ENCODE measurements at regions of chr4 and their contacts with region 1.

Region 1: GRCh38 chr4:99088481-99089365 is at the start of gene ADH5:
- DNase-seq: peak; percentile 81 to 95 (median 88)
- ATAC-seq: peak; percentile 93 to 95
- H3K4me3 Mint-ChIP-seq: peak within 1 kb of the TSS; percentile 92 to 99 (median 98)
- H3K27ac Mint-ChIP-seq: peak within 1 kb of the TSS; percentile 97 to 99 (median 99)
- H3K4me1 Mint-ChIP-seq: peaks cover 19 to 70% (median 56%) of the 10 kb centered on the region in 4 donors
- H3K27me3 Mint-ChIP-seq: no peaks in the 10 kb centered on the region
- polyA plus RNA-seq, gene ADH5: 125 to 137 (median 136) TPM

Region 2: GRCh38 chr4:98143001-98143899 is 945.5 kb before region 1 on chr4 and contains the start of gene STPG2:
- POLR2A ChIA-PET with region 1: interaction called, 17 read pairs
- DNase-seq: peak; percentile 85 to 95 (median 91)
- ATAC-seq: peak; percentile 95 to 97
- H3K4me3 Mint-ChIP-seq: peak within 1 kb of the TSS; percentile 89 to 99 (median 93)
- H3K27ac Mint-ChIP-seq: peak within 1 kb of the TSS; percentile 94 to 99 (median 98)
- H3K4me1 Mint-ChIP-seq: peaks cover 5 to 26% (median 18%) of the 10 kb centered on the region in 4 donors
- H3K27me3 Mint-ChIP-seq: no peaks in the 10 kb centered on the region
- polyA plus RNA-seq, gene STPG2: 0.09 to 0.10 TPM in 2 of 3 donors, not detected in the other

Region 3: DNA sequence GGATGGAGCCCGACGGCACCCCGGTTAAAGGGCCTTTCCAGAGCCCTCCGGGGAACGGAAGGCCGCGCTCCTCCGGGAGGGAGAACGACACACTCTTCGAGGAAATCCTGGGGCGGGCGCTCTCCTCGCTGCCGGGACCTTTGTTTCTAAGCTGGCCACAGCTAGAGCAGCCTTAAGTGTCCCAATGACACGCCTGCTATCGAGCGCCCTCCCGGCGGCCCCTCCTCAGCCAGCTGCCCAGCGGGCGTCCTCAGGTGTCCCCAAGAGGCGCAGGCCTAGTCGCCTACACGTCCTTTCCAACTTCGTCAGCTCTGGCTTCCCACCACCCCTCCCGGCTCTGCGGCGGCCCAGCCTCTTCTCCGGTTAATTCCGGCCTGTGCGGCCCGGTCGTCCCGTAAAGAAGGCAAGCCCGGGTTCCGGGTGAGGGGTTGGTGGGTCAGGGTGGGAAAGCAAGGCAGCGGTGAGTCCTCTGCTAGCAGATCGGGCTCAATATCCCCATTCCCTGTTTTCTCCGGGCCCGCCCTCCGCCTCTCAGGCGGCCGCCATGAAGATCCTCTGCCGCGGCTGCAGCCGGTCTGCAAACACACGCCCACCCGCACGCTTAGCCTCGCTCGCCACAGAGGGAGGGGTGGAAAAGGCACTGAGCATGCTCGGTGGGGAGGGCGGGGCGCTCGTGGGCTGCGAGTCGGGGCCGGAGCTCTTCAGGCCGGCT is 828.0 kb before region 1 on chr4:
- POLR2A ChIA-PET with region 1: interaction called, 20 read pairs
- DNase-seq: peak in 8 of 10 donors; percentile 69 to 94 (median 82)
- ATAC-seq: peak; percentile 74 to 83
- H3K4me3 Mint-ChIP-seq: peak overlapping the region; percentile 91 to 96 (median 94)
- H3K27ac Mint-ChIP-seq: peak overlapping the region; percentile 79 to 97 (median 92)
- H3K4me1 Mint-ChIP-seq: peaks cover 31 to 56% (median 49%) of the 10 kb centered on the region in 4 donors
- H3K27me3 Mint-ChIP-seq: no peaks in the 10 kb centered on the region

Region 4: GRCh38 chr4:98928505-98929340 is 160.0 kb before region 1 on chr4 and contains the start of gene EIF4E:
- POLR2A ChIA-PET with region 1: interaction called, 23 read pairs
- DNase-seq: peak; percentile 85 to 100 (median 97)
- ATAC-seq: peak; percentile 82 to 86
- H3K4me3 Mint-ChIP-seq: peak within 1 kb of the TSS; percentile 91 to 100 (median 98)
- H3K27ac Mint-ChIP-seq: peak within 1 kb of the TSS; percentile 92 to 99 (median 96)
- H3K4me1 Mint-ChIP-seq: peaks cover 8 to 53% (median 34%) of the 10 kb centered on the region in 4 donors
- H3K27me3 Mint-ChIP-seq: peaks cover 0 to 7% (median 0%) of the 10 kb centered on the region in 5 donors
- polyA plus RNA-seq, gene EIF4E: 51.5 to 68.3 (median 62.7) TPM

Region 5: DNA sequence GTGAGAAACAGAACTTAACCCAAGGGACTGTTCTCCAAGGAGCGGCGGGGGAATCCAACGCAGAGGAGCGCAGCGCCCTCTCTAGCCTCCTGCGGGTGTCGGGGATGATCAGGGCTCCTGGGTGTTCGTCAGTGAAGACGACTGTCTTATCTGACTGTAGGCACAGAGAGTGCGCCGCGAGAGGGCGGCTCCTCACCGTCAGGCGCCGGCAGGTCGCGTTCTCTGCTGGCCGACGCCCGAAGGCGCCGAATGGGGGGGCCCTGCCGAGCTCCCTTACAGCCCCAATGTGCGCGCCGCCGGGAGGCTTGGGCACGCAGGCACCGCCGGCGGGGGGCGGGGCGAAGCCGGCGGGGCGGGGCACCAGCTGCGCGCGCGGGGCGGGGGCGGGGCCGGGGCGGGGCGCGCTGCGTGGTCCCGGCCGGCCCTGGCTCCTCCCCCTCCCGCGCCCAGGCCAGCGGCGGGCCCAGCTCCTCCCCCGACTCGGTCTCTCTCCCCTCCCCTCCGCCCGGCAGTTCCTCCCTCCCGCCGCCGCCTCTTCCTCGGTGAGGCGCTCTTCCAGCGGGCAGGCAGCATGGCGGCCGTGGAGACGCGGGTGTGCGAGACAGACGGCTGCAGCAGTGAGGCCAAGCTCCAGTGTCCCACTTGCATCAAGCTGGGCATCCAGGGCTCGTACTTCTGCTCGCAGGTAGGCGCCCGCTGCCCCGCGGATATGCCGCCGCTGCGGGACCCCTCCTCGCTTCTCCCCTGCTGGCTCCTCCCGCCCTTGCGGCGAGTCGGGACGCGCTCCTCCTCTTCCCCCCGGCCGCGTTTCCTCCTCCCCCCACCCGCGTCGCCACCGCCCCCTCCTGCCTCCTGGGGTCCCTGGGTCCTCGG is 93.3 kb before region 1 on chr4 and contains the start of gene METAP1:
- POLR2A ChIA-PET with region 1: interaction called, 32 read pairs
- DNase-seq: peak; percentile 85 to 98 (median 97)
- ATAC-seq: peak; percentile 87 to 89
- H3K4me3 Mint-ChIP-seq: peak within 1 kb of the TSS; percentile 68 to 96 (median 91)
- H3K27ac Mint-ChIP-seq: peak within 1 kb of the TSS; percentile 92 to 100 (median 98)
- H3K4me1 Mint-ChIP-seq: peaks cover 9 to 44% (median 41%) of the 10 kb centered on the region in 4 donors
- H3K27me3 Mint-ChIP-seq: no peaks in the 10 kb centered on the region
- polyA plus RNA-seq, gene METAP1: 23.8 to 29.2 (median 24.3) TPM

Region 6: GRCh38 chr4:99033956-99034355 is 54.8 kb before region 1 on chr4:
- POLR2A ChIA-PET with region 1: no interaction called
- DNase-seq: no peak
- ATAC-seq: no peak
- H3K4me3 Mint-ChIP-seq: no peak overlapping the region
- H3K27ac Mint-ChIP-seq: peak overlapping the region in 1 of 10 donors; percentile 18
- H3K4me1 Mint-ChIP-seq: peaks cover 13 to 29% (median 26%) of the 10 kb centered on the region in 4 donors
- H3K27me3 Mint-ChIP-seq: no peaks in the 10 kb centered on the region

Region 7: DNA sequence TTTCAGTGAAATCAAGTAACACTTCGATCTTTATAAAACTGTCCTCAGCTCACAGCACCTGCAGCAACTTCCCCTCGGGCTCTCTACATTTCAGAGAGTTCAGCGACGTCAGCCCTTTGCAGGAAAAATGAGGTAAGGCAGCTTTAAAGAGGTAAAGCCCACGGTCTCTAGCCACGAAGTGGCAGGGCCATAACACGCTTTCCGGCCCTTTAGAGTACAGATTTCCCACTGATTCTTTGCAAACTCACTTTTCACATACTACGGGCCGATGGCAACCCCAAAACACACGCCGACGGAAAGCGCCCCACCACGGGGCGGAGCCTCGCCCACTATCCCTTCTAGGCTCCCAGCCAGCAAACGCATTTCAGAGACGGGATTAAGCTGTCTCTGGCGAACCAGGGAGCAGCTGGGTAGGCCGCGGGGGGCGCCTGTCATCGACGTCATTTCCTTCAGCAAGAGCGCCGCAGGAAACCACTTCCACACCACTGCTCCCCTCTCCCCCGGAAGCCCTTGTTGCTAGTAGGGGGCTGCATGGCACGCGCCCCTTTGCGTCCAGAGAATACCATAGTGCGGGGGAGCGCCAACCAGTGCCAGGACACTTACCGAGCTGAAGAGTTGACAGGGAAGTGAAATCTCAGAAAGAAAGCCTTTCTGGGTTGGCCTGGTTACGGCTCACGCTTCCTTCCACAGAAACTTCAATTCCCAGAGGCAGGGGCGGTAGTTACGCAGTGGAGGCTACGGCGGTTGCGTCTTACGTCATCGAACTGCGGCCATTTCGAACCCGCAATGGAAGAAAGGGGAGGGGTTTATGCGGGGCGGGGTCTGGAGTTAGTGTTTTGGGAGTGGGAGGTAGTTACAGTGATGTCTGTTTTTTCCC is 474.8 kb after region 1 on chr4 and contains the start of gene TRMT10A:
- POLR2A ChIA-PET with region 1: interaction called, 13 read pairs
- DNase-seq: peak; percentile 86 to 99 (median 97)
- ATAC-seq: peak; percentile 85 to 88
- H3K4me3 Mint-ChIP-seq: peak within 1 kb of the TSS; percentile 92 to 99 (median 96)
- H3K27ac Mint-ChIP-seq: peak within 1 kb of the TSS; percentile 97 to 100 (median 100)
- H3K4me1 Mint-ChIP-seq: peaks cover 2 to 29% (median 14%) of the 10 kb centered on the region in 4 donors
- H3K27me3 Mint-ChIP-seq: peaks cover 12 to 35% (median 15%) of the 10 kb centered on the region in 5 donors
- polyA plus RNA-seq, gene TRMT10A: 2.5 to 2.9 (median 2.6) TPM

Region 8: GRCh38 chr4:99949034-99949998 is 860.6 kb after region 1 on chr4:
- POLR2A ChIA-PET with region 1: interaction called, 13 read pairs
- DNase-seq: peak; percentile 71 to 93 (median 88)
- ATAC-seq: peak; percentile 28 to 37
- H3K4me3 Mint-ChIP-seq: no peak overlapping the region
- H3K27ac Mint-ChIP-seq: no peak overlapping the region
- H3K4me1 Mint-ChIP-seq: peaks cover 10 to 39% (median 30%) of the 10 kb centered on the region in 4 donors
- H3K27me3 Mint-ChIP-seq: no peaks in the 10 kb centered on the region